ENCODE measurements at regions of chr3 and their contacts with region 1.

Region 1: DNA sequence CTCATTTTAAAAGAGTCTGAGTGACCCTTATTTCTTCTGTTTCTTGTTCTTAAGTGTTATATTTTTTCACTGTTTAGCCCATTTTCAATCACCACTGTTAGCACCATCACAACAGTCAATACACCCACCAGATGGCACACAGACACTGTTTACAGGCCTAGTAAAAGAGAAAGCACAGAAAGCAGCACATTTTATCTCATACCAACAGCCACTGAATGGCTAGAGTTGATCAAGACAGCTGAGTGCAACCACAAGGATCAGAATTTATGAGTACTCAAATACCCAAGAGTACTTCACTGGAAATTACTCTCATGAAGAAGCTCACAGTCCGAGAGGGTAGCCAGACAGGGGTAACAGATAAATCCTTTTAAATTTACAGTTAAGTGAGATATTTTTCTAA is 127.0 kb downstream of the TFDP2 start:
- DNase-seq: peak; percentile 45
- ATAC-seq: peak; percentile 90
- H3K4me3 ChIP-seq: 0 out of 2 replicates have a peak overlapping the region, but pooled peaks have one; percentile 14
- H3K27ac ChIP-seq: no peak overlapping the region
- H3K4me1 ChIP-seq: peaks cover 14% of the 10 kb centered on the region
- H3K27me3 ChIP-seq: no peaks in the 10 kb centered on the region
- CTCF ChIP-seq: peak; percentile 43 to 81 (median 44); a peak in 4 of 6 replicates
- EP300 ChIP-seq: no peak
- POLR2A ChIP-seq: no peak
- RAD21 ChIP-seq: peak; percentile 74

Region 2: DNA sequence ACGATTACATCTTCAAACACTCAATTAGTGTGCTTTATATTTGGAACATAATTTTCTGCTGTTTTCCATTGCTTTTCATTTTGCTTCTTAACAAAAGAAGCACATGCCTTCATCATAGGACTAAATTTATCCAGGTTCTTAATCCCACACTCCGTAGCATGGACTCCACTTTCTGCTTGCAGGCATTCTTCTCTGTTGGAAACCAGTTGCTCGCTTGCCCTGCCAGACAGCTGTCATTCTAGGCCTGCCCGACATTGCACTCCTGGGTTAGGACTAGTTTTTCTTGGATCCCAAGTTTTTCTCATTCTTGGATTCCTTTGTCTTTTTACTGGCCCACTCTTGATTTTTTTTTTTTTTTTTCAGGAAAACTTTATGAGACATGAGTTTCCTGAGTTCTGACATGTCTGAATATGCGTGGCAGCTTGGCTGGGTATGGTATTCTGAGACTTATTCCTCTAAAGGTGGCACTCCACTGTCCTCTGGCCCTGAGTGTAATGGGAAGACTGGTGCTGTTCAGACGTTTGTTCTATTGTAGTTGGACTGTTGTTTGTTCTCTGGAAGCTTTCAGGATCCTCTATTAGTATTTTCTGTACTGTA is 152.2 kb before region 1 on chr3:
- CTCF ChIA-PET with region 1: no interaction called
- POLR2A ChIA-PET with region 1: no interaction called
- RAD21 ChIA-PET with region 1: no interaction called
- SMC1A ChIA-PET with region 1: no interaction called
- in situ Hi-C with region 1: no loop called
- intact Hi-C with region 1: no loop called
- DNase-seq: no peak
- ATAC-seq: no peak
- H3K4me3 ChIP-seq: no peak overlapping the region
- H3K27ac ChIP-seq: no peak overlapping the region
- H3K4me1 ChIP-seq: no peaks in the 10 kb centered on the region
- H3K27me3 ChIP-seq: no peaks in the 10 kb centered on the region
- CTCF ChIP-seq: no peak
- EP300 ChIP-seq: no peak
- POLR2A ChIP-seq: no peak
- RAD21 ChIP-seq: no peak

Region 3: DNA sequence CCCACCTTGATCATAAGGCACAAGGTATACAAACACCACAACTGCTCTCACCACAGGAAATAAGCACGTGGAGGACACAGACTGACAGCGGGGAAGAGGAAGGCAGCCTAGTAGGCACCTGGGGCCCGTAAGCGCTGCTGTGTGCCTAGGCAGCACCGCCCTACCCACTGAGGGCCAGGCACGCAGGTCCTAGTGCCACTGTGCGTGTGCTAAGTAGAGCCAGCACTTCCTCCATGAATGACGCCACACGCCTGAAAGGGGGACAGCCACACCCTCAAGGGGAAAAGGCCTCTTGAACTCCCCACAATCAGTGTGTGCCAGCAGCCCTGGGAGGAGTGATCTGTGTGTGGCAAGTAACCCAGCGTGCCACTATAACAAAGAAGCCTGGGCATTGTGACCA is 73.0 kb before region 1 on chr3:
- CTCF ChIA-PET with region 1: no interaction called
- POLR2A ChIA-PET with region 1: no interaction called
- RAD21 ChIA-PET with region 1: no interaction called
- SMC1A ChIA-PET with region 1: no interaction called
- in situ Hi-C with region 1: no loop called
- intact Hi-C with region 1: no loop called
- DNase-seq: no peak
- ATAC-seq: no peak; the same call in 2 of the 3 replicates
- H3K4me3 ChIP-seq: no peak overlapping the region
- H3K27ac ChIP-seq: no peak overlapping the region
- H3K4me1 ChIP-seq: no peaks in the 10 kb centered on the region
- H3K27me3 ChIP-seq: no peaks in the 10 kb centered on the region
- CTCF ChIP-seq: no peak
- EP300 ChIP-seq: no peak
- POLR2A ChIP-seq: peak; percentile 42; the same call in 1 of the 2 replicates
- RAD21 ChIP-seq: no peak

Region 4: GRCh38 chr3:141959921-141960554 is 62.3 kb before region 1 on chr3:
- CTCF ChIA-PET with region 1: interaction called, 10 read pairs
- POLR2A ChIA-PET with region 1: no interaction called
- RAD21 ChIA-PET with region 1: no interaction called
- SMC1A ChIA-PET with region 1: interaction called, 3 read pairs
- in situ Hi-C with region 1: no loop called
- intact Hi-C with region 1: loop called (anchors 5 kb)
- DNase-seq: no peak
- ATAC-seq: no peak
- H3K4me3 ChIP-seq: no peak overlapping the region
- H3K27ac ChIP-seq: no peak overlapping the region
- H3K4me1 ChIP-seq: no peaks in the 10 kb centered on the region
- H3K27me3 ChIP-seq: no peaks in the 10 kb centered on the region
- CTCF ChIP-seq: no peak
- EP300 ChIP-seq: no peak
- POLR2A ChIP-seq: no peak
- RAD21 ChIP-seq: no peak

Region 5: GRCh38 chr3:142129516-142130171 is 107.3 kb after region 1 on chr3:
- CTCF ChIA-PET with region 1: interaction called, 7 read pairs
- POLR2A ChIA-PET with region 1: no interaction called
- RAD21 ChIA-PET with region 1: interaction called, 7 read pairs
- SMC1A ChIA-PET with region 1: interaction called, 9 read pairs
- in situ Hi-C with region 1: no loop called
- intact Hi-C with region 1: loop called (anchors 5 kb)
- DNase-seq: no peak
- ATAC-seq: no peak
- H3K4me3 ChIP-seq: no peak overlapping the region
- H3K27ac ChIP-seq: no peak overlapping the region
- H3K4me1 ChIP-seq: no peaks in the 10 kb centered on the region
- H3K27me3 ChIP-seq: no peaks in the 10 kb centered on the region
- CTCF ChIP-seq: no peak
- EP300 ChIP-seq: no peak
- POLR2A ChIP-seq: no peak
- RAD21 ChIP-seq: no peak

Region 6: GRCh38 chr3:142148792-142149672 is 126.7 kb after region 1 on chr3 and contains the start of gene TFDP2:
- CTCF ChIA-PET with region 1: interaction called, 5 read pairs
- POLR2A ChIA-PET with region 1: no interaction called
- RAD21 ChIA-PET with region 1: interaction called, 3 read pairs
- SMC1A ChIA-PET with region 1: interaction called, 7 read pairs
- in situ Hi-C with region 1: no loop called
- intact Hi-C with region 1: loop called (anchors 5 kb)
- DNase-seq: peak; percentile 27
- ATAC-seq: peak; percentile 99
- H3K4me3 ChIP-seq: peak within 1 kb of the TSS; percentile 87
- H3K27ac ChIP-seq: peak within 1 kb of the TSS; percentile 38
- H3K4me1 ChIP-seq: peaks cover 3% of the 10 kb centered on the region; the same call in 1 of the 2 replicates
- H3K27me3 ChIP-seq: no peaks in the 10 kb centered on the region
- CTCF ChIP-seq: no peak
- EP300 ChIP-seq: no peak
- POLR2A ChIP-seq: peak; percentile 85
- RAD21 ChIP-seq: no peak
- polyA plus RNA-seq, gene TFDP2: 46.9 to 51.2 TPM

Region 7: GRCh38 chr3:142723968-142724681 is 701.7 kb after region 1 on chr3 and contains the start of gene TRPC1:
- CTCF ChIA-PET with region 1: no interaction called
- POLR2A ChIA-PET with region 1: no interaction called
- RAD21 ChIA-PET with region 1: no interaction called
- SMC1A ChIA-PET with region 1: no interaction called
- in situ Hi-C with region 1: no loop called
- intact Hi-C with region 1: loop called (anchors 5 kb)
- DNase-seq: no peak
- ATAC-seq: peak; percentile 97
- H3K4me3 ChIP-seq: peak within 1 kb of the TSS; percentile 70
- H3K27ac ChIP-seq: no peak within 1 kb of the TSS
- H3K4me1 ChIP-seq: no peaks in the 10 kb centered on the region
- H3K27me3 ChIP-seq: no peaks in the 10 kb centered on the region
- CTCF ChIP-seq: no peak
- EP300 ChIP-seq: no peak
- POLR2A ChIP-seq: peak; percentile 79
- RAD21 ChIP-seq: no peak
- polyA plus RNA-seq, gene TRPC1: 0.05 TPM